Activated CD4-positive, alpha-beta memory T cell treated with anti-CD3 and anti-CD28 coated beads for 36 hours (primary cell): ENCODE measurements at regions of chr10 and their contacts with region 1.

Region 1: DNA sequence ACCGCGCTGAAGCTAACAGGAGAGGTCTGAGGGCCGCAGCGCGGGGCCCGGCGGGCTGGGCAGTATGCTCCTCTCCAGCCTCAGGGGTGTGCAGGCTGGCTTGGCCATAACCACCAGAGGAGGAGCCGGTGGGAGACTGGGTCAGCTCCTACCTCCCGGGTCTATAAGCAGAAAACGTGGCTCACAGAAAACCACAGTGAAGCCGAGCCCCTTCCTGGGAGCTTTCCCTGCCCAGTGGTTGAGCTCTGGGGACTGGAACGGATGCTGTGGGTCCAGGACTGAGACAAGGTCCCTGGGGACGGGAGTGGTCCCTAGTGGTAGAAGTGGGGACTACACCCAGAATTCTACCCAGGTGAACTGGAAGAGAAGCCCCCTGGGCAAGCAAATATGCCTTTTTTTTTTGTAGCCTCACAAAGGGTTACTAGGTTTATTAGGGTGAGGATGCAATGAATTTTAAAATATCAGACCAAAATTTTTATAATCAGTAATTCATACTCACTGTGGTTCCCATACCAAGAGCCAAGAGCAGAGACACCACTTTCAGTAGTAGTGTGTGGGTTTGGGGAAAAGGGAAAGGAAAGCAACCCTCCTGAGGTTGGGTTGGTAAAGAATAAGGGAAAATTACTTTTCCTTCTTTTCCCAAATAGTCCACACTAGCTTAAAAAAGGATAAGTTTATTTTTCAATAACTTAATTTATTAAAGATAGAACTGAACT is 67.9 kb upstream of the PRKCQ start:
- DNase-seq: peak; percentile 81
- H3K4me3 Mint-ChIP-seq: no peak overlapping the region
- H3K27ac Mint-ChIP-seq: peak overlapping the region; percentile 56
- H3K4me1 Mint-ChIP-seq: peaks cover 61% of the 10 kb centered on the region
- H3K27me3 Mint-ChIP-seq: no peaks in the 10 kb centered on the region

Region 2: DNA sequence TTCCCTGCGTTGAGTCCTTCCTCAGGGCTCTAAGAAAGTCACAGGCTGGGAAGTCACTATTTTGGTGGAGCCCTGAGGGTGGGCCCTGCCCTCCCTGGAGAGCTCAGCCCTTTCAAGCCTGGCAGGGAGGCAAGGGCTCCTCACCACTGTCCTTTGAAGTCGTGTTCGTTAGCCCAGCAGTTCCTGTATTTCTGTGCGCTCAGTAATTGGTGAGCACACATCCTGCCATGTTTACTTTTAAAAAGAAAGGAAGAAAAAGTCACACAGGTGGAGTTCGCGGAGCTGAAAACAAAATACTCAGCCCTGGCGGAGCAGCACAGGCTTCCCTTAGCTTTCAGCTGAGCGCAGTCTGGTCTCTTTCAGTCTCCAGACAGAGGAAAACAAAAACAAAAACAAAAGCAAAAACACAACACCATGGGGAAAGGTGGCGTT is 105.0 kb before region 1 on chr10:
- CTCF ChIA-PET with region 1: interaction called, 3 read pairs
- POLR2A ChIA-PET with region 1: interaction called, 3 read pairs
- intact Hi-C with region 1: loop called (anchors 1 kb)
- DNase-seq: peak; percentile 65
- H3K4me3 Mint-ChIP-seq: peak overlapping the region; percentile 90
- H3K27ac Mint-ChIP-seq: peak overlapping the region; percentile 99
- H3K4me1 Mint-ChIP-seq: peaks cover 73% of the 10 kb centered on the region
- H3K27me3 Mint-ChIP-seq: no peaks in the 10 kb centered on the region

Region 3: GRCh38 chr10:6619660-6620059 is 28.3 kb before region 1 on chr10:
- CTCF ChIA-PET with region 1: interaction called, 6 read pairs
- POLR2A ChIA-PET with region 1: interaction called, 4 read pairs
- intact Hi-C with region 1: loop called (anchors 1 kb)
- DNase-seq: no peak
- H3K4me3 Mint-ChIP-seq: no peak overlapping the region
- H3K27ac Mint-ChIP-seq: no peak overlapping the region
- H3K4me1 Mint-ChIP-seq: peaks cover 56% of the 10 kb centered on the region
- H3K27me3 Mint-ChIP-seq: no peaks in the 10 kb centered on the region

Region 4: DNA sequence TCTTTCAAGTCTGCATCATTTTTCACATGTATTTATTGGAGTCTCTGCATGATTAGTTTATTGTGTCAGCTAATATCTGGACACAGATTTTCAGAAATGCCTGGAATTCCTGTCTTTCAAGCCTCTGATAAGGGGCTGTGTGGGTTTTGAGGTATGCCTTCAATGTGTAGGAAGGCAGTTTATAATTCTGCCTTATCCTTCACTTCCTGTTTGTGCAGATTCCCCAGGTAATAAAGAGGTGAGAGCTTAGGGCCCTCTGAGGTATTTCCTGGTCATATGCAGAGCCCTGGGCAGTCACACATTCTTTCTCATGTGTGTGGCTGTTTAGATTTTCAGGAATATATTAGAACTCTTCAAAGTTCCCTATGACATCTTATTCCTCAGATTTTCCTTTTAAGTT is 11.5 kb after region 1 on chr10:
- CTCF ChIA-PET with region 1: interaction called, 16 read pairs
- POLR2A ChIA-PET with region 1: no interaction called
- intact Hi-C with region 1: no loop called
- DNase-seq: no peak
- H3K4me3 Mint-ChIP-seq: no peak overlapping the region
- H3K27ac Mint-ChIP-seq: no peak overlapping the region
- H3K4me1 Mint-ChIP-seq: peaks cover 5% of the 10 kb centered on the region
- H3K27me3 Mint-ChIP-seq: peaks cover 3% of the 10 kb centered on the region

Region 5: DNA sequence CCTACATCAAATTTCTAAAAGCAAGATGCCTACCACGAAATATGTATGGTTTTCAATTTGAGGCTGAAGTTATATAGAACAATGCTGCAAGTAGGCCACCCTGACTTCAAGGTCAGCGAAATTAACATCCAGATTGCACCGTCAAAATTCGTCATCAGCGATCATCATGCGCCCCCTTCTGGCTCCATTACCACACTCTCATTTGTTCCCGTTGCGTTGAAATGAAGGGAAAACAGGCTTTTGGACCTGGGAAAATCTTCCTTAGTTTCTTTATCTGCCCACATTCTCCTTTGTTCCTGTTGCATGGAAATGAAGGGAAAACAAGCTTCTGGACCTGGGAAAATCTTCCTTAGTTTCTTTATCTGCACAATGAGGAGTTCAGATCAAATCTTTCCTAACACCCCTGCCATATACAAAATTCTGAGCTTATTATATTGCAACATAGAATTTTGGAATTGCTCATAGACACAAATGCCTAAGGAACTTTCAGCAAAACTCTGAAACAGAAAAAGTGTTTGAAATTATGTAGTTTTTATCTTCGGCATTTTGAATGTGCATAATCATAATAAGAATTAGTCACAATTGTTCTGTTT is 30.3 kb after region 1 on chr10:
- CTCF ChIA-PET with region 1: interaction called, 12 read pairs
- POLR2A ChIA-PET with region 1: no interaction called
- intact Hi-C with region 1: no loop called
- DNase-seq: peak; percentile 76
- H3K4me3 Mint-ChIP-seq: no peak overlapping the region
- H3K27ac Mint-ChIP-seq: no peak overlapping the region
- H3K4me1 Mint-ChIP-seq: peaks cover 4% of the 10 kb centered on the region
- H3K27me3 Mint-ChIP-seq: peaks cover 6% of the 10 kb centered on the region